ENCODE measurements at regions of chr7 and their contacts with region 1.

Region 1: DNA sequence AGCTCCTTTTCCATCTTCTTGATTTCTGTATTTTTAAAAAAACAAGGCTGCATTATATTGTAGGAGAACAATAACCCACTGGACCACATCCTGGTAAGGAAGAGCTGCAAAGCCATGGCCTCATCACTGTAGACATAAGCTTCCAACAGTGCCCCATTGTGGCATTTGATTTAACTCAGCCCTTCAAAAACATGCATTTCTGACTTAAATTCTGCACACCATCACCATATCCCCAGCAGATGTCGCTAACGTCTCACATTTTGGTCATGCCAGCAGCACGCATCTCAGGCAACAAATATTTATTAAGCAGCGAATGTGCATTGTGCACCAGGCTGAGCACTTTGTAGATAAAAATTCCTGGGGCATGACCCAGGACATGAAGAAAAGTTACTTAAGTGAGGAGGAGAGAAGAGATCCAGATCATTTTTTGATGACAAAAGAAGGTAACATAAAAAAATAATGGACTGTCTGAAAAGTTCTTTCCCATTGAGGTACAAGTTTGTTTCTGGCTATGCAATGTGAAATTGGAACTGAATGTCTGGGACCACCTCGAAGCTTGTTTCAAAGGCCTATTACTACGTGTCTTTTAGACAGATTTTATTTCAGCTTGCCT is 164.6 kb upstream of the CDCA7L start:
- DNase-seq: peak; percentile 55
- ATAC-seq: peak; percentile 95
- H3K4me3 ChIP-seq: no peak overlapping the region
- H3K27ac ChIP-seq: no peak overlapping the region
- H3K4me1 ChIP-seq: no peaks in the 10 kb centered on the region
- H3K27me3 ChIP-seq: peaks cover 0 to 2% of the 10 kb centered on the region in 2 experiments; a peak in 1 of 4 replicates
- CTCF ChIP-seq: peak; percentile 76 to 97 (median 90); a peak in 5 of 6 replicates
- EP300 ChIP-seq: no peak
- POLR2A ChIP-seq: no peak
- RAD21 ChIP-seq: peak; percentile 100

Region 2: GRCh38 chr7:22016507-22016906 is 93.8 kb before region 1 on chr7:
- CTCF ChIA-PET with region 1: no interaction called
- POLR2A ChIA-PET with region 1: no interaction called
- RAD21 ChIA-PET with region 1: no interaction called
- SMC1A ChIA-PET with region 1: no interaction called
- in situ Hi-C with region 1: no loop called
- intact Hi-C with region 1: no loop called
- DNase-seq: no peak
- ATAC-seq: peak; percentile 70
- H3K4me3 ChIP-seq: no peak overlapping the region
- H3K27ac ChIP-seq: no peak overlapping the region
- H3K4me1 ChIP-seq: no peaks in the 10 kb centered on the region
- H3K27me3 ChIP-seq: 0 out of 4 replicates have a peak, but pooled peaks cover 0 to 2% of the 10 kb centered on the region in 2 experiments
- CTCF ChIP-seq: no peak
- EP300 ChIP-seq: no peak
- POLR2A ChIP-seq: no peak
- RAD21 ChIP-seq: no peak

Region 3: DNA sequence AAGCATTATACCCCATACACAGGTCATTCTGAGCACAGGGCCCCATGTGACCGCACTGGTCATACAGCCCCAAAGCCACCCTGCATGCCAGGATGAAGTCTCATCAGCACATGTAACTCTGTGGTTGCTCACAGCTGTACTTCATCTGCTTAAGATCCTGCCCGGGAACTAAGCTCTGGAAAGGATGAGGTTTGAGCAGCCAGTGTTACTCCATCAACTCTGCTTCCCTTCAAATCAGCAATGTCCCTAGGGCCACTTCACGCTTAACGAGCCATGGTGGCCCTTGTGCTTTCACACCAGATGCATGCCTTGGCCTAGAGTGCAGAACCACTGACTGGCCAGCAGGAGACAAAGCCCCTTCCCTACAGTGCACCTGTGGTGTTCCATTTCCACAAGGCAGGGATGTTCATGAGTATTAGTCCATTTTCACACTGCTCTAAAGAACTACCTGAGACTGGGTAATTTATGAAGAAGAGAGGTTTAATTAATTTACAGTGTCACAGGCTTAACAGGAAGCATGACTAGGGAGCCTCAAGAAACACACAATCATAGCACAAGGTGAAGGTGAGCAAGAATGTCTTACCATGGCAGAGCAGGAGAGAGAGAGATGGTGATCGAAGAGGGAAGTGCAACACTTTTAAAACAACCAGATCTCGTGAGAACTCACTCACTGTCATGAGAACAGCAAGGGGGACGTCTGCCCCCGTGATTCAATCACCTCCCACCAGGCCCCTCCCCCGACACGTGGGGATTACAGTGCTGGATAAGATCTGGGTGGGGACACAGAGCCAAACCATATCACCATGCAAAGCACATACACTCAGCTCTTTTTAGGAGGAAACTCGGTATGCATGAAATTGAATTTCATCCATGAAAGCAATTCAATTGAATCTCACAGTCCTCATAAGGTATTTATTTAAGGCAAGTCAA is 15.7 kb before region 1 on chr7:
- CTCF ChIA-PET with region 1: interaction called, 41 read pairs
- POLR2A ChIA-PET with region 1: no interaction called
- RAD21 ChIA-PET with region 1: interaction called, 3 read pairs
- SMC1A ChIA-PET with region 1: interaction called, 6 read pairs
- in situ Hi-C with region 1: no loop called
- intact Hi-C with region 1: no loop called
- DNase-seq: no peak
- ATAC-seq: peak; percentile 68
- H3K4me3 ChIP-seq: no peak overlapping the region
- H3K27ac ChIP-seq: no peak overlapping the region
- H3K4me1 ChIP-seq: no peaks in the 10 kb centered on the region
- H3K27me3 ChIP-seq: no peaks in the 10 kb centered on the region; a peak in 1 of 4 replicates
- CTCF ChIP-seq: peak in 2 of 3 experiments; percentile 25 to 29; a peak in 2 of 6 replicates
- EP300 ChIP-seq: no peak
- POLR2A ChIP-seq: no peak
- RAD21 ChIP-seq: no peak

Region 4: DNA sequence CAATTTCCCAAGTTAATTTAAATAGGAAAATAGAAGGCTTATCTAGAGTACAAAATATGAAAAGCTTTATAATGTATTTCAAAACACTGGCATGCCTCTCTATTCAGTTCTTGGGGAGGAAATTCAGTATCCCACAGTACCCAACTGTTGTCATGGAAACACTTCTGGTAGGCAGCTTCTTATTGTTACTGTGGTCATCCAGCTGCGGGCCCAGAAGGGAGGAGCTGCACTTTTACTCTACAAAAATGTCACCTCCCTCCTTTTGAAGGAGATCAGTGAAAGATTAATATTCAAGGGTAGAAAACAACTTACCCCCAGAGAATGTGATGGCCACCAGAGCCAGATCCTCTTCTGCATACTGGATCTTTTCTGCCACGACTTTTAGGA is 43.8 kb after region 1 on chr7:
- CTCF ChIA-PET with region 1: interaction called, 11 read pairs
- POLR2A ChIA-PET with region 1: no interaction called
- RAD21 ChIA-PET with region 1: no interaction called
- SMC1A ChIA-PET with region 1: interaction called, 3 read pairs
- in situ Hi-C with region 1: no loop called
- intact Hi-C with region 1: no loop called
- DNase-seq: no peak
- ATAC-seq: no peak
- H3K4me3 ChIP-seq: no peak overlapping the region
- H3K27ac ChIP-seq: no peak overlapping the region
- H3K4me1 ChIP-seq: no peaks in the 10 kb centered on the region
- H3K27me3 ChIP-seq: no peaks in the 10 kb centered on the region
- CTCF ChIP-seq: no peak
- EP300 ChIP-seq: no peak
- POLR2A ChIP-seq: no peak
- RAD21 ChIP-seq: no peak

Region 5: DNA sequence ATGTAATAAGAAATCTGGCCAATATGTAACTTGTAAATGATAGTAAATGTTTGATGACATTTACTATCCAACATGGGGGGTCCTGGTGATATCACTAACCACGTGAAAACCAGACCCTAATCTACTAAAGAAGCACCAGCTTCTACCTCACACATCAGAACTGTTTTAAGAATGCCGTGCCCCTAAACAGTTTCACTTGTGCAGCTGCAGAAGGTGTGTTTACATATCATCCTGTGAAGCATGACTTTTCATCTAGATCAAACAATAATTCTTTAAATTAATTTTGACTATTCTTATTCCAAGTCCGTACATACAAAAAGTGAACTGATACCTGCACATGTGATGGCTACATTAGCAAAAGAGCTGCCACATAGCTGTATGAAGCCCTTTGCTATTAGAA is 328.7 kb after region 1 on chr7:
- CTCF ChIA-PET with region 1: interaction called, 12 read pairs
- POLR2A ChIA-PET with region 1: no interaction called
- RAD21 ChIA-PET with region 1: no interaction called
- SMC1A ChIA-PET with region 1: interaction called, 5 read pairs
- in situ Hi-C with region 1: no loop called
- intact Hi-C with region 1: no loop called
- DNase-seq: no peak
- ATAC-seq: peak; percentile 75
- H3K4me3 ChIP-seq: no peak overlapping the region
- H3K27ac ChIP-seq: no peak overlapping the region
- H3K4me1 ChIP-seq: peaks cover 21% of the 10 kb centered on the region
- H3K27me3 ChIP-seq: no peaks in the 10 kb centered on the region
- CTCF ChIP-seq: no peak
- EP300 ChIP-seq: peak; percentile 68 to 69; a peak in 2 of 4 replicates
- POLR2A ChIP-seq: no peak
- RAD21 ChIP-seq: no peak

Region 6: DNA sequence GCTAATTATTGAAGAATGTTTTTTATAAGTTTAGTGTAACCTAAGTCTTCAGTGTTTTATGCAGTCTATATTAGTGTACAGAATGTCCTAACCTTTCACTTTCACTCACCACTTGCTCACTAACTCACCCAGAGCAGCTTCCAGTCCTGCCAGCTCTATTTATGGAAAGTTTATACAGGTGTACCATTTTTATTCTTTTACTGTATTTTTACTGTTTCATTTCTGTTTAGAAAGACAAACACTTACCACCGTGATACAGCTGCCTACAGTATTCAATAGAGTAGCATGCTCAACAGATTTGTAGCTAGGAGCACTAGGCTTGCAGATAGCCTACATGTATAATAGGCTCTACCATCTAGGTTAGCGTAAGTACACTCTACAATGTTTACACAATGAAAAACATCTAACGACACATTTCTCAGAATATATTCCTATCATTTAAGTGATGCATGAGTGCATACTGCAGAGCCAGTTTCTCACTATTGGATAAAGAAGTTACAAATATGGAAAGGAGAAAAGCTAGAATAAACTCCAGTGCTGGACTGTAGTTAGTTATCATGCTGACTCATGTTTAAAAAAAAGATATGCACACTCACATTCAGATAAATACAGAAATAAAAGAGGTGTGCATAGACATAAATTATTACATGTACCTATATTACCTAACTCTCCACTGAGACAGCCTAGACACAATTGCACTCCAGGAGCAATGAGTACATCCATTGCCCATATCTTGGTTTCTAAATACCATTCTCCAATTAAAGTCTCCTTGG is 359.2 kb after region 1 on chr7:
- CTCF ChIA-PET with region 1: interaction called, 12 read pairs
- POLR2A ChIA-PET with region 1: no interaction called
- RAD21 ChIA-PET with region 1: interaction called, 3 read pairs
- SMC1A ChIA-PET with region 1: interaction called, 9 read pairs
- in situ Hi-C with region 1: no loop called
- intact Hi-C with region 1: no loop called
- DNase-seq: no peak
- ATAC-seq: peak; percentile 39; the same call in 1 of the 3 replicates
- H3K4me3 ChIP-seq: no peak overlapping the region
- H3K27ac ChIP-seq: no peak overlapping the region
- H3K4me1 ChIP-seq: no peaks in the 10 kb centered on the region
- H3K27me3 ChIP-seq: peaks cover 0 to 2% of the 10 kb centered on the region in 2 experiments; a peak in 1 of 4 replicates
- CTCF ChIP-seq: no peak
- EP300 ChIP-seq: no peak
- POLR2A ChIP-seq: no peak
- RAD21 ChIP-seq: no peak

Region 7: GRCh38 chr7:22488643-22489462 is 378.5 kb after region 1 on chr7:
- CTCF ChIA-PET with region 1: interaction called, 74 read pairs
- POLR2A ChIA-PET with region 1: no interaction called
- RAD21 ChIA-PET with region 1: interaction called, 20 read pairs
- SMC1A ChIA-PET with region 1: interaction called, 22 read pairs
- in situ Hi-C with region 1: loop called (anchors 5 kb)
- intact Hi-C with region 1: loop called (anchors 1 kb)
- DNase-seq: peak; percentile 9
- ATAC-seq: peak; percentile 91
- H3K4me3 ChIP-seq: no peak overlapping the region
- H3K27ac ChIP-seq: no peak overlapping the region
- H3K4me1 ChIP-seq: no peaks in the 10 kb centered on the region
- H3K27me3 ChIP-seq: no peaks in the 10 kb centered on the region; a peak in 1 of 4 replicates
- CTCF ChIP-seq: peak; percentile 78 to 92 (median 89)
- EP300 ChIP-seq: no peak
- POLR2A ChIP-seq: no peak
- RAD21 ChIP-seq: peak; percentile 99

Measured in GM12878 (cell line).